Colonic mucosa (tissue), 4 donors: ENCODE measurements at regions of chr2 and their contacts with region 1.

Region 1: GRCh38 chr2:183078465-183079138 is at the start of gene DUSP19:
- DNase-seq: peak; percentile 98
- H3K4me3 ChIP-seq: peak within 1 kb of the TSS; percentile 48
- H3K27ac ChIP-seq: peak within 1 kb of the TSS; percentile 72
- H3K4me1 ChIP-seq: no peaks in the 10 kb centered on the region
- H3K27me3 ChIP-seq: no peaks in the 10 kb centered on the region
- CTCF ChIP-seq: no peak
- total RNA-seq, gene DUSP19: 2.0 to 2.5 TPM

Region 2: DNA sequence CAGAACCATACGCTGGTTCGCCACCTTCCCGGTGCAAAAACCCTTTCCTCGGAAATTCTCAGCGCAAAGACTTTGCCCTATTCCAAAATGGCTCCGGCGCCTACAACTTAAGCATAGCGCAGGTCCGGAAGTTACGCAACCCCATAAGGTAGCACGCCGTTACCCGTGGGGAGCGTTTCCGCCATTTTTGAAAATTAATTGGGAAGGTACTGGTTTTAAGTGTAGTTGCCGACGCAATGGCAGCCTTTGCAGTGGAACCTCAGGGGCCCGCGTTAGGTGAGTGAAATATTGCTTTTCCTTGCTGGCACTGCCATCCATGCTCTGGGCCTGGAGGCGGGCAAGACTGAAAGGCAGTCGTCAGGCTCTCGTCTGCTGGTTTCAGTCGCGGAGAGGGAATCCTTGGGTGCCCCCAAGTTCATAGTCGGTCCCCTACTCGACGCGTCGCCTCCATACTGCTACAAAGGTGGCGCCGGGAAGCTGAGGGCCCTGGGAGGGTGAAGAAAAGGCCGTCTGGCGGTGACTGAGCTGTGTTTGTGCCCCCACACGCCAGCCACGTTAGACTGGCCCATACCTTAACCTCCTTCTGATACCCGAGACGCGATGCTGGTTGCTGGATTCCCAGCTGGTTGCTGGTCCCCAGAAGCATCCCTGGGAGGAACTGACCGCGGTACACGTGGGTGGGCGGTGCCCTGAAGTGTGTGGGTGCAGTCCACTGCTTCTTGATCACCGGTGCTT is 45.8 kb after region 1 on chr2 and contains the start of gene NUP35:
- intact Hi-C with region 1: loop called (anchors 5 kb)
- DNase-seq: peak; percentile 92
- H3K4me3 ChIP-seq: peak within 1 kb of the TSS; percentile 85
- H3K27ac ChIP-seq: peak within 1 kb of the TSS; percentile 82
- H3K4me1 ChIP-seq: peaks cover 8% of the 10 kb centered on the region
- H3K27me3 ChIP-seq: no peaks in the 10 kb centered on the region
- CTCF ChIP-seq: no peak
- total RNA-seq, gene NUP35: 11.3 to 19.1 TPM

Region 3: DNA sequence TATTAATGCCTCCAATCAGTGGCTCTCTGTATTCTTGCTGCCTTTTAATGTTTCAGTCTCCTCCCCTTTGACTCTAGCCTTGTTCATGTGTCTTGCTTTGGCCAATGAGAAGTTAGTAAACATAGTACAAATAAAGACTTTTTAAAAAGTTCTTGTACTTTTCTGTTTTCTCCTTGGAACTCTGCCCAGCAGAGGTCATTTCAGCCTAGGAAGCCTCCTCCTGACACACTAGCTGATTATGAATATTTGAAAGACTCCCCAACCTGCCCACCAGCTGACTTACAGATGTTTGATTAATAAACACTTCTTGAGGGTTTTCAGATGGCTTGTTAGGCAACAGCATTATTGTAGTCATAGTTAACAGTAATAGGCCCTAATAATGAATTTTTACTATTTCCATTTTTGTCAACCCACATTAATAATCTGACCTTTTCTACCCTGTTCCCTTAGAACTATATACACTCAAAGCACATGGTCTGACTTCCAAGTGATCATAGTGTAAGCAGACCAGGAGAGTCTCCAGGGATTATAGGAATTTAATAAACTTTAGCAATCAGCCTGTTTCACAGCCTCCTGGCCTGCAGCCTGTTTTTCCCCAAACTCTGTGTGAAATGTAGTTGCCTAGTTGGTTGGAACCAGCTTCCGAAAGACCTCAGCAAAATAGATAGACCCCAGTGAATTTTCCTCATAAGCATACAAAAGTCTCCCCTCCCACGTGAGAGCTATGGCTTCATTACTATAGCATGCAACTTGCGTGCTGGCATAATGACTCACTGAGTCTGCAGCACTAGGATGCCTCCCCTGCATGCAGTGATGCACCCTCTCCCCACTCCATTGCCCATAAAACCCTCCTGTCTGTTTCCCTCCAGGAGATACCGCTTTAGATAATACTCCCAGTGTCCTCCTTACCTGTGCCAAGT is 849.1 kb after region 1 on chr2:
- intact Hi-C with region 1: no loop called
- DNase-seq: no peak
- H3K4me3 ChIP-seq: no peak overlapping the region
- H3K27ac ChIP-seq: no peak overlapping the region
- H3K4me1 ChIP-seq: no peaks in the 10 kb centered on the region
- H3K27me3 ChIP-seq: no peaks in the 10 kb centered on the region
- CTCF ChIP-seq: no peak